ENCODE measurements at regions of chr18 and their contacts with region 1.

Region 1: GRCh38 chr18:2201036-2201600 is 370.2 kb downstream of the METTL4 start:
- DNase-seq: no peak
- H3K4me3 ChIP-seq: no peak overlapping the region
- H3K27ac ChIP-seq: no peak overlapping the region
- H3K4me1 ChIP-seq: no peaks in the 10 kb centered on the region
- H3K27me3 ChIP-seq: no peaks in the 10 kb centered on the region
- CTCF ChIP-seq: no peak

Region 2: GRCh38 chr18:1499265-1499664 is 701.9 kb before region 1 on chr18:
- intact Hi-C with region 1: no loop called
- DNase-seq: no peak
- H3K4me3 ChIP-seq: no peak overlapping the region
- H3K27ac ChIP-seq: no peak overlapping the region
- H3K4me1 ChIP-seq: no peaks in the 10 kb centered on the region
- H3K27me3 ChIP-seq: no peaks in the 10 kb centered on the region
- CTCF ChIP-seq: no peak

Region 3: GRCh38 chr18:2147476-2148230 is 53.5 kb before region 1 on chr18:
- intact Hi-C with region 1: loop called (anchors 10 kb)
- DNase-seq: no peak
- H3K4me3 ChIP-seq: no peak overlapping the region
- H3K27ac ChIP-seq: no peak overlapping the region
- H3K4me1 ChIP-seq: no peaks in the 10 kb centered on the region
- H3K27me3 ChIP-seq: no peaks in the 10 kb centered on the region
- CTCF ChIP-seq: no peak

Region 4: GRCh38 chr18:2547477-2548087 is 346.5 kb after region 1 on chr18:
- intact Hi-C with region 1: no loop called
- DNase-seq: no peak
- H3K4me3 ChIP-seq: no peak overlapping the region
- H3K27ac ChIP-seq: no peak overlapping the region
- H3K4me1 ChIP-seq: no peaks in the 10 kb centered on the region
- H3K27me3 ChIP-seq: no peaks in the 10 kb centered on the region
- CTCF ChIP-seq: peak; percentile 54

Region 5: DNA sequence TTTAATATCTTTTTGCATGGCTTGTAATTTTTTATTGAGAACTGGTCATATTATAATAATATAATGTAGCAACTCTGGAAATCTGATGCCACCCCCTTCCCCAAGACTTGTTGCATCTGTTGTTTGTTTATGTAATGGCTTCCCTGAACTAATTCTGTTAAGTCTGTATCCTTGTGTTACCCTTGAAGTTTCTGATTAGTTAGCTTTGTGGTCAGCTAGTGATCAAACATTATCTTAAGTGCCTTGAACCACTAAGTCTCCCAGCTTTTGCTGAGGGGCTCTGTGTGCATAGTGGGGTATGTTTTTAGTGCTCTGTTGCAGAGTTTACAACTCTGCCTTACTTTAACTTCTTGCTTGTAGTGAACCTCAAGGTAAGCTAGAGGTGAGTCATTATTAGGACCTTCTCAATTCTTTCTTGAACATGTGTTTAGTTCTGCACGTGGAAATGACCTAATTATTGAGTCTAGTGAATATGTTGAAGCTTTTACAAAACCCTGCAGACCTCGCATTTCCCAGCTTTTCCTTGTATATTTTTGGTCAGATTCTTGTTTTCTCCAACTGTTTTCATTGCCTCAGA is 479.2 kb after region 1 on chr18:
- intact Hi-C with region 1: no loop called
- DNase-seq: no peak
- H3K4me3 ChIP-seq: no peak overlapping the region
- H3K27ac ChIP-seq: no peak overlapping the region
- H3K4me1 ChIP-seq: no peaks in the 10 kb centered on the region
- H3K27me3 ChIP-seq: no peaks in the 10 kb centered on the region
- CTCF ChIP-seq: no peak